ENCODE measurements at regions of chr16 and their contacts with region 1.

Region 1: GRCh38 chr16:19886073-19886941 is 1.7 kb upstream of the GPRC5B start:
- DNase-seq: peak; percentile 79
- H3K4me3 ChIP-seq: peak overlapping the region in 2 of 4 donors; percentile 4 to 72
- H3K27ac ChIP-seq: no peak overlapping the region
- H3K4me1 ChIP-seq: peaks cover 6 to 28% (median 25%) of the 10 kb centered on the region in 4 donors
- H3K27me3 ChIP-seq: peaks cover 36% of the 10 kb centered on the region
- CTCF ChIP-seq: peak; percentile 99 to 100 (median 100)
- EP300 ChIP-seq: no peak
- POLR2A ChIP-seq: no peak

Region 2: GRCh38 chr16:19555162-19555937 is 331.0 kb before region 1 on chr16 and contains the start of gene VPS35L:
- in situ Hi-C with region 1: loop called in 2 of 4 experiments (anchors 10 kb)
- intact Hi-C with region 1: loop called (anchors 2 kb)
- DNase-seq: peak; percentile 98
- H3K4me3 ChIP-seq: peak within 1 kb of the TSS; percentile 65 to 94 (median 83)
- H3K27ac ChIP-seq: peak within 1 kb of the TSS; percentile 88 to 94 (median 92)
- H3K4me1 ChIP-seq: peaks cover 0 to 20% (median 14%) of the 10 kb centered on the region in 4 donors
- H3K27me3 ChIP-seq: no peaks in the 10 kb centered on the region
- CTCF ChIP-seq: peak; percentile 61 to 93 (median 80)
- EP300 ChIP-seq: no peak
- POLR2A ChIP-seq: peak; percentile 45
- total RNA-seq, gene VPS35L: 40.0 to 89.8 (median 51.5) TPM

Region 3: GRCh38 chr16:19563377-19563776 is 322.9 kb before region 1 on chr16:
- in situ Hi-C with region 1: loop called in 2 of 4 experiments (anchors 10 kb)
- intact Hi-C with region 1: loop called (anchors 2 kb)
- DNase-seq: no peak
- H3K4me3 ChIP-seq: no peak overlapping the region
- H3K27ac ChIP-seq: no peak overlapping the region
- H3K4me1 ChIP-seq: no peaks in the 10 kb centered on the region
- H3K27me3 ChIP-seq: no peaks in the 10 kb centered on the region
- CTCF ChIP-seq: no peak
- EP300 ChIP-seq: no peak
- POLR2A ChIP-seq: no peak

Region 4: DNA sequence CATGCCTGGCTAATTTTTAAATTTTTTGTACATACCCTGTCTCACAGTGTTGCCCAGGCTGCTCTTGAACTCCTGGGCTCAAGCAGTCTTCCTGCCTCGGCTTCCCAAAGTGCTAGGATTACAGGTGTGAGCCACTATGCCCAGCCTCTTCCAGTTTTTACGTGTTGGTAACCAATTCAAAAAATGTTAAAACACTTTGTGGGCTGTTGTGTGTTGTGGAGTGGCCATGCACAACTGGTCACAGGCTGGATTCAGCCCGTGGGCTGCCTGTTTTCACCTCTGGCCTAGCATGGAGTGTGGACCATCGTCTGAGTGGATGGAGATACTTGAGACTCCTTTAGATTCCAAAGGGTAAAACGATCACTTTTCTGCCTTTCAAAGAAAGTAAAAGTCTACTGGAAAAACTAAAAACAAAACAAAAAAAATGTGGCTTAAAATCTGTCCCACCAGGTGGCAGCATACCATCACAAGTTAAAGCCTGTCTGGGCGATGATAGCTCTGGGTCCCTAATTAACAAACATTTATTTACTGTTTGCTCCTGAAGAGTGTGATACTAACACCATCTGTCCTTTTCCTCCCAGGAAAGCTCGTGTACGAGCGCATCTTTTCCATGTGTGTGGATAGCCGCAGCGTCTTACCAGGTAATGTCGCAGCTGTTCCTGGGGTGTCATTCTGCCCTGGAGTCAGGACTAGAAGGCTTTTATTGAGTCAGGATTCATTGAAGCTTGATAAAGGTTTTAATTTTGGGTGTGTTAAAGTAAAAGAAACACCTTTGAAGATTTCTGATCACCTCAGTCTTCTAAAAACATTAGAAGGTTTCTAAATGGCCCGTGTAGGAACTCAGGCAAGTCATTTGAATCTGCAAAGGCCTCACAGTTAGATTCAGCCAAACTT is 285.0 kb before region 1 on chr16:
- in situ Hi-C with region 1: loop called in 3 of 4 experiments (anchors 5 to 10 kb)
- intact Hi-C with region 1: no loop called
- DNase-seq: peak; percentile 13
- H3K4me3 ChIP-seq: no peak overlapping the region
- H3K27ac ChIP-seq: peak overlapping the region in 1 of 4 donors; percentile 12
- H3K4me1 ChIP-seq: no peaks in the 10 kb centered on the region
- H3K27me3 ChIP-seq: no peaks in the 10 kb centered on the region
- CTCF ChIP-seq: peak; percentile 53 to 64 (median 63)
- EP300 ChIP-seq: no peak
- POLR2A ChIP-seq: no peak

Region 5: GRCh38 chr16:19717771-19718602 is 168.3 kb before region 1 on chr16 and contains the starts of genes IQCK and KNOP1:
- in situ Hi-C with region 1: loop called in 1 of 4 experiments (anchors 25 kb)
- intact Hi-C with region 1: loop called (anchors 10 kb)
- DNase-seq: peak; percentile 90
- H3K4me3 ChIP-seq: peak within 1 kb of the TSS; percentile 73 to 95 (median 91)
- H3K27ac ChIP-seq: peak within 1 kb of the TSS; percentile 82 to 90 (median 86)
- H3K4me1 ChIP-seq: peaks cover 9 to 32% (median 27%) of the 10 kb centered on the region in 4 donors
- H3K27me3 ChIP-seq: no peaks in the 10 kb centered on the region
- CTCF ChIP-seq: peak in 2 of 5 experiments; percentile 36 to 39
- EP300 ChIP-seq: peak; percentile 15
- POLR2A ChIP-seq: peak; percentile 50
- total RNA-seq, gene IQCK: 8.3 to 18.2 (median 12.7) TPM
- total RNA-seq, gene KNOP1: 4.4 to 25.8 (median 12.7) TPM

Measured in transverse colon (tissue), 4 donors.